ENCODE measurements at regions of chr20 and their contacts with region 1.

Region 1: GRCh38 chr20:38748097-38748860 is at the start of gene ACTR5:
- DNase-seq: peak; percentile 80
- ATAC-seq: peak; percentile 96
- H3K4me3 ChIP-seq: peak within 1 kb of the TSS; percentile 84
- H3K27ac ChIP-seq: peak within 1 kb of the TSS; percentile 81
- H3K4me1 ChIP-seq: peaks cover 5% of the 10 kb centered on the region; the same call in 1 of the 2 replicates
- H3K27me3 ChIP-seq: peaks cover 5% of the 10 kb centered on the region; the same call in 1 of the 2 replicates
- CTCF ChIP-seq: no peak
- POLR2A ChIP-seq: peak; percentile 27; the same call in 1 of the 2 replicates
- RAD21 ChIP-seq: no peak
- total RNA-seq, gene ACTR5: 5.3 and 6.6 TPM in 2 replicates

Region 2: GRCh38 chr20:38472513-38473372 is 275.5 kb before region 1 on chr20 and contains the start of gene RALGAPB:
- CTCF ChIA-PET with region 1: no interaction called
- POLR2A ChIA-PET with region 1: no interaction called
- dilution Hi-C with region 1: no loop called
- in situ Hi-C with region 1: loop called (anchors 25 kb)
- intact Hi-C with region 1: no loop called
- DNase-seq: peak; percentile 96
- ATAC-seq: peak; percentile 98
- H3K4me3 ChIP-seq: peak within 1 kb of the TSS; percentile 67
- H3K27ac ChIP-seq: peak within 1 kb of the TSS; percentile 68
- H3K4me1 ChIP-seq: peaks cover 2% of the 10 kb centered on the region
- H3K27me3 ChIP-seq: no peaks in the 10 kb centered on the region; the same call in 1 of the 2 replicates
- CTCF ChIP-seq: peak; percentile 33
- POLR2A ChIP-seq: peak; percentile 66
- RAD21 ChIP-seq: 0 out of 2 replicates have a peak, but pooled peaks have one; percentile 8
- total RNA-seq, gene RALGAPB: 30.3 and 32.8 TPM in 2 replicates

Region 3: GRCh38 chr20:38569747-38570525 is 178.3 kb before region 1 on chr20:
- CTCF ChIA-PET with region 1: no interaction called
- POLR2A ChIA-PET with region 1: no interaction called
- dilution Hi-C with region 1: no loop called
- in situ Hi-C with region 1: no loop called
- intact Hi-C with region 1: no loop called
- DNase-seq: no peak
- ATAC-seq: no peak
- H3K4me3 ChIP-seq: no peak overlapping the region
- H3K27ac ChIP-seq: no peak overlapping the region
- H3K4me1 ChIP-seq: no peaks in the 10 kb centered on the region
- H3K27me3 ChIP-seq: no peaks in the 10 kb centered on the region
- CTCF ChIP-seq: no peak
- POLR2A ChIP-seq: no peak
- RAD21 ChIP-seq: no peak

Region 4: GRCh38 chr20:38633577-38634093 is 114.6 kb before region 1 on chr20:
- CTCF ChIA-PET with region 1: no interaction called
- POLR2A ChIA-PET with region 1: no interaction called
- dilution Hi-C with region 1: no loop called
- in situ Hi-C with region 1: no loop called
- intact Hi-C with region 1: loop called (anchors 5 kb)
- DNase-seq: peak; percentile 20
- ATAC-seq: peak; percentile 99
- H3K4me3 ChIP-seq: no peak overlapping the region
- H3K27ac ChIP-seq: no peak overlapping the region
- H3K4me1 ChIP-seq: no peaks in the 10 kb centered on the region
- H3K27me3 ChIP-seq: peaks cover 4% of the 10 kb centered on the region
- CTCF ChIP-seq: peak; percentile 67
- POLR2A ChIP-seq: no peak
- RAD21 ChIP-seq: peak; percentile 29; the same call in 1 of the 2 replicates

Region 5: GRCh38 chr20:38685853-38686473 is 62.3 kb before region 1 on chr20:
- CTCF ChIA-PET with region 1: no interaction called
- POLR2A ChIA-PET with region 1: no interaction called
- dilution Hi-C with region 1: no loop called
- in situ Hi-C with region 1: no loop called
- intact Hi-C with region 1: no loop called
- DNase-seq: peak; percentile 44
- ATAC-seq: peak; percentile 95
- H3K4me3 ChIP-seq: no peak overlapping the region
- H3K27ac ChIP-seq: no peak overlapping the region
- H3K4me1 ChIP-seq: no peaks in the 10 kb centered on the region
- H3K27me3 ChIP-seq: no peaks in the 10 kb centered on the region
- CTCF ChIP-seq: no peak
- POLR2A ChIP-seq: no peak
- RAD21 ChIP-seq: no peak

Region 6: DNA sequence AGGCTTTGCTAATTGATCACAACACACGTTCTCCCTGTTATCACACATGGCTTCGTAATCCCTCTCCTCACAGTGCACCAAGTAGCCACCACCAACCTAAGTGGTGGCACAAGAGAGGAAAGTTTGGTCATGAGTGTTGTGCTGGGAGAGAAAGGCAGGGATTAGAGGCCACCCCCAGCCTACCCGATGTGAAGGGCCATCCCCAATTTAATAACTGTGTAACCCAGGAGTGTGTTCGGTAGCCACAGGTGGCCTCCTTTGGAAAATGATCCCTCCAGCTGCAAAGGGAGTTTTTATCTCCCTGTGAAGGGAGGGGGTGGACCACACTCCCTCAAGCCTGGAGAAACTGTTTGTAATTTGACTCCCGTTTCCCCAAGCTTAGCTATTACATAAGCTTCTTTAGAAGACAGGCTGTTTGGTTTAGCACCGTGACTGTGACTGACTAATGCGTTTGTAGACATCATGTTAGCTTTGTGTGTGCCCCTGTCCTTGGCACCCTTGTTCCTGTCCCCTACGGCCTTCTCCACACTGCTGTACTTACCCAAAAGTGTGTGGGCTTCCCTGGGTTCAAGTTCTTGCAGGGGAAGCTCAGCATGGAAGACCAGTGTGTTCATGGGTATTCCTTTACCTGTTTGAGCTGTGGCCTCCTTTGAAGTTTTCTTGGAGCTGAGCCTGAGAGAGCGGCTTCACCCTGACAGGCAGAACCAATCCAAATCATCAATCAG is 77.8 kb after region 1 on chr20:
- CTCF ChIA-PET with region 1: no interaction called
- POLR2A ChIA-PET with region 1: no interaction called
- dilution Hi-C with region 1: no loop called
- in situ Hi-C with region 1: loop called (anchors 25 kb)
- intact Hi-C with region 1: no loop called
- DNase-seq: peak; percentile 67
- ATAC-seq: peak; percentile 83
- H3K4me3 ChIP-seq: no peak overlapping the region
- H3K27ac ChIP-seq: no peak overlapping the region
- H3K4me1 ChIP-seq: no peaks in the 10 kb centered on the region
- H3K27me3 ChIP-seq: peaks cover 10% of the 10 kb centered on the region
- CTCF ChIP-seq: no peak
- POLR2A ChIP-seq: no peak
- RAD21 ChIP-seq: no peak

Region 7: GRCh38 chr20:39049684-39050554 is 301.6 kb after region 1 on chr20:
- CTCF ChIA-PET with region 1: no interaction called
- POLR2A ChIA-PET with region 1: no interaction called
- dilution Hi-C with region 1: no loop called
- in situ Hi-C with region 1: loop called (anchors 25 kb)
- intact Hi-C with region 1: loop called (anchors 5 kb)
- DNase-seq: peak; percentile 51
- ATAC-seq: peak; percentile 91
- H3K4me3 ChIP-seq: peak overlapping the region; percentile 71
- H3K27ac ChIP-seq: peak overlapping the region; percentile 71
- H3K4me1 ChIP-seq: peaks cover 2% of the 10 kb centered on the region; the same call in 1 of the 2 replicates
- H3K27me3 ChIP-seq: peaks cover 3% of the 10 kb centered on the region; the same call in 1 of the 2 replicates
- CTCF ChIP-seq: peak; percentile 96
- POLR2A ChIP-seq: no peak
- RAD21 ChIP-seq: peak; percentile 89

Measured in IMR-90 (cell line).